Activated T-helper 2 cell treated with anti-CD3 and anti-CD28 coated beads, Interferon-gamma antibody, Interleukin-2, Interleukin-4, amounts not matched to agents 10 μg/mL and 5 μg/mL and 100 μg/mL, durations not matched to agents 14 hours and 24 hours and 36 hours (primary cell): ENCODE measurements at regions of chr6 and their contacts with region 1.

Region 1: DNA sequence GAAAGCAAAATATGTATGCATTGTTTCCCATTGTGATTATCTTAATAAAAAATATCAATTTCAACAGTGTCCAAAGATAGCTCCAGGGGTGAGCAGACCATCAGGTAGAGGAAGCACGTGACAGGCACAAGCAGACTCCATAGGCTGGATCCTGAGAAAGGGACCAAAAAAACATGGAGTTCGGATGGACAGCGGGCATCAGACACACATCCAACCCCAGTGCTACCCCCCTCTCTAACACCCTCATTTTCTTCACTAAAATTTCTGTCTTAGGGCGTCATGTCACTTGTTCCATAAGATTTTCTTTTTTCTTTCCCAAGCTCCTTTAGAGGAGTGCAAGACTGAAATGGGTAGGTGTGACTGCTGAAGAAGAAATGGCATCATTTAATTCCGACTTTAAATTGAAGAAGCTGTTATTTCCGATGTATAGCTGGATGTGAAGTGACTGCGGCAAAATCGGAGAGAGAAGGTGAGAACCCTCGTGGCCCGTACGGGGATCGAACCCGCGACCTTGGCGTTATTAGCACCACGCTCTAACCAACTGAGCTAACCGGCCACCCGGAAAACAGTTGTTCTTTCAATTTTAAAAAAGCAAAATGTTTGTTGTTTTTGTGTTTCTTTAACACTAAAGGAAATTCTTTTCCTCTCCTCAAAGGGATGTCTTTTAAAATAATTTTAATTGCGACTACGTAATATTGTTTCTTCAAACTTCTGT is 10.3 kb upstream of the PRSS16 start:
- DNase-seq: peak; percentile 34
- H3K4me3 Mint-ChIP-seq: peak overlapping the region; percentile 70
- H3K27ac Mint-ChIP-seq: no peak overlapping the region
- H3K4me1 Mint-ChIP-seq: peaks cover 27% of the 10 kb centered on the region
- H3K27me3 Mint-ChIP-seq: peaks cover 60% of the 10 kb centered on the region

Region 2: DNA sequence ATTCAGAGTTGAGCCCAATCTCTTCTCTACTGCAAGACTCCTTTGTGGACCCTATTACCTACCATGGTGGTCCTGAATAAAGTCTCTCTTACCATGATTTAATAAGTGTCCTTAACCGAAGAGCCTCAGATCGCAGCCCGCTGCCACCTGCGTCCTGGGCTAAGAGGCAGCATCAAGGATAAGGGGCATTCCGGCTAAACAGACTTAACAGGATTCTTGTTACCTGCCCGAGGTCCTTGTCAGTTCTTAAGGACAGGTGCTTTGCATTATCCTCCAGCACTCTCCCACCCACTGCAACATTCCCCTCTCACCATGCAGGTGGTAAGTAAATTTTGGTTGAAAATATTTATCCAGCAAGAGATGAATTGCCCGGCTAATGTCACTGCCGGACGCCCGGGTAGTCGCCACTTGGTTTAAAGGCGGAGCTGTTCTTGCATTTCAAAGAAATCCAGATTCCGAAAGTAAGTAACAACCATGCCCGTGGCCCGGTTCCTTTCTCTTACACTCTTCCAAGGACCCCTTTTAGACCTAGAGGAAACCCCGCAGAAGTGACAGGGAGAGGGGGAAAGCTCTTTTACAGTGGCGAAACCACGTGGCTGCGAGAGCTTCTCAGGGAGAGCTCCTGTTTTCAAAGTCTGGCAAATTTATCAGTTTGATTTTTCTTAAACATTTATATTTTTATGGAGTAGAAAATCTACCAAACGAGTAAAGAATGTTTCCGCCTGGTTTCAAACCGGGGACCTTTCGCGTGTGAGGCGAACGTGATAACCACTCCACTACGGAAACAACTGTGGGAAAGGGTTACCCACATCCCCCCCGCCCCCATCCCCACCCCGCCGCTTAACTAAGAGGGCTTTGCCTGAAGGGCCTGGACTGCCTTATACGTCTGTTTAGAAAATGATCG is 31.6 kb before region 1 on chr6:
- intact Hi-C with region 1: loop called (anchors 1 kb)
- DNase-seq: peak; percentile 31
- H3K4me3 Mint-ChIP-seq: peak overlapping the region; percentile 18
- H3K27ac Mint-ChIP-seq: no peak overlapping the region
- H3K4me1 Mint-ChIP-seq: peaks cover 27% of the 10 kb centered on the region
- H3K27me3 Mint-ChIP-seq: peaks cover 10% of the 10 kb centered on the region

Region 3: DNA sequence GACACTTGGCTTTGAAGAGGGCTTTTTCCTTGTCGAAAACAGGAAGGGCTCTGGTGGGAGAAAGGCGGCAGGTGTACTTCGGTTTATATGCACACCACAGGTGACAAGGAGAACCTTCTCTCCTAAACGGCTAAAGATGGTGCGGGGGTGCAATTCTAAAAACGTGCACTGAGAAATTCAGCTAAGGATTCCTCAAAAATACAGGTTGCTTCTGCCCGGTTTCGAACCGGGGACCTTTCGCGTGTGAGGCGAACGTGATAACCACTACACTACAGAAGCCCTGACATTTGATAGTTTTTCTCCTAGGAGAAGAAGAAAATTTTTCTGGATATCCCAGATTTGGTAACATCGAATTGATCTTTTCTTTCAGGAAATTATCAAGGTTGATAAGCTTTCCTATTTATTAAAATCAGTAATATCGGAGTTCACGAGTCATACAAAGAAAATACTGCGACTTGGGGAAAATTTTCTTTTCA is 42.9 kb after region 1 on chr6:
- intact Hi-C with region 1: loop called (anchors 10 kb)
- DNase-seq: no peak
- H3K4me3 Mint-ChIP-seq: peak overlapping the region; percentile 68
- H3K27ac Mint-ChIP-seq: no peak overlapping the region
- H3K4me1 Mint-ChIP-seq: peaks cover 18% of the 10 kb centered on the region
- H3K27me3 Mint-ChIP-seq: peaks cover 71% of the 10 kb centered on the region